Activated CD4-positive, alpha-beta memory T cell treated with anti-CD3 and anti-CD28 coated beads for 36 hours (primary cell): ENCODE measurements at regions of chr2 and their contacts with region 1.

Region 1: DNA sequence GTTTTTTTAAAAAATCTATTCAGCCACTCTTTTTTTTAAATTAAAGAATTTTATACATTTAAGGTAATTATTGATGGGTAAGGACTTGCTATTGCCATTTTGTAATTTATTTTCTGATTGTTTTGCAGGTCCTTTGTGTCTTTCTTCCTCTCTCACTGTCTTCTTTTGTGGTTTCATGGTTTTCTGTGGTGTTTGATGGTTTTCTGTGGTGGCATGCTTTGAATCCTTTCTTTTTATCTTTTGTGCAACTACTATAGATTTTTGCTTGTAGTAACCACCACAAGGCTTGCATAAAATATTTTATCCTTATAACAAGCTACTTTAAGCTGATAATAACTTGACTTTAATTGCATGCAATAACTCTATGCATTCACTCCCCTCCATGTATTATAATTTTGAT is 31.5 kb upstream of the SLC4A10 start:
- DNase-seq: no peak
- H3K4me3 Mint-ChIP-seq: no peak overlapping the region
- H3K27ac Mint-ChIP-seq: no peak overlapping the region
- H3K4me1 Mint-ChIP-seq: peaks cover 7% of the 10 kb centered on the region
- H3K27me3 Mint-ChIP-seq: peaks cover 7% of the 10 kb centered on the region

Region 2: DNA sequence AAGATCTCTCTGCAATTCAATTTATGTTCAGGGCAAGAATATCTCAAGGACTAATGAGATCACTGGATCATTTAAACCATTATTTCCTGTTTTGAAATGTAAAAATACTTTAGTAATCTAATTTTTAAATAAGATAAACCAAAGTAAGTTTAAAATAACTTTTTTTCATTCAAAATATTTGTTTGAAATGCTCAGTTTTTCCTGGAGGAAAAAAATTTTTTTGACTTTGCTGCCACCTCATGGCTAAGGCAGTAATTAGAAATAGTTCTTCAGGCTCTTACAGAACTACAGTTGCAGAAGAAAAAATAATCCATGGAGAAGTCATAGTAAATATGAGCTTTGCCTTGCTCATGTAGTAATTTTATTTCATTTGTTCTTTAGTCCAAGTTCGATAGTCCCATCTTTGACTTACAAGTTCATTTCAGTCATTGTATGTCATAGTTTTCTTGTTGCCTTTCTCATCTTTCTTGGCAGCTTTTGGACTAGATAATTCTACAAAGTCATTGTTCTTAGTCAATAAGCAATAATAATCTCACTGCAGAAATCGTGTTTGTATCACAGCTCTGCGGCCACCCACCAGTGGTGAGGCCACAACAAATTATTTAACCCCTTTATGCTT is 353.9 kb after region 1 on chr2:
- CTCF ChIA-PET with region 1: interaction called, 116 read pairs
- POLR2A ChIA-PET with region 1: no interaction called
- intact Hi-C with region 1: no loop called
- DNase-seq: no peak
- H3K4me3 Mint-ChIP-seq: no peak overlapping the region
- H3K27ac Mint-ChIP-seq: no peak overlapping the region
- H3K4me1 Mint-ChIP-seq: peaks cover 6% of the 10 kb centered on the region
- H3K27me3 Mint-ChIP-seq: no peaks in the 10 kb centered on the region